ENCODE measurements at regions of chr3 and their contacts with region 1.

Region 1: DNA sequence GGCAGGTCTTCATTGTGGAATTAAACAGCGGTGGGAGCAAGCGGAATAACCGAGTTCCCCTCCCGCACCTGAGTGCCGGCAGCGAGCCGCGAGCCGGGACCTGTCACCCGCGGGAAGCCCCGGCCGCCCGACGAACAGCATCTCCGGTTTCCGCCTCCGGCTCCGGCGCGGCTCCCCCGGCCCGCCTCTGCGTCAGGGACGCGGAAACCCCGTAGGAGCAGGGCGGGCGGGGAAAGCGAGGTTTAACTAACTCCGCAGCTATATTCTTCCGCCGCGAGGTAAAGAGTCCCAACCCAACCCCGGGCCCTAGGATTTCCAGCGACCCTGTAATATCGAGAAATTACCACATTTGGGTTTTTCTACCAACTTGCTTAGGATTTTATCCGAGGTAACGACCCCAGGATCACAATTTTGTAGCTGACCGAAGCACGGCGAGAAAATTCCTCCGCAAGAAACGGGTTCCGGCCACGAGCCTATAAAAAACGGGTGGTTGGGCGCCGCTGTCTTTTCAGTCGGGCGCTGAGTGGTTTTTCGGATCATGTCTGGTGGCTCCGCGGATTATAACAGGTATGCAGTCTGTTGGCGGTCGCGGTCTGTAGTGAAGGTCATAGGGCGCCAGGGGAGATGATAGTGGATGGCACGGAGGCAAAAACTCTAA is at the start of gene EIF4A2:
- DNase-seq: peak; percentile 87 to 93 (median 91)
- ATAC-seq: peak; percentile 86
- H3K4me3 ChIP-seq: peak within 1 kb of the TSS; percentile 88
- H3K4me3 Mint-ChIP-seq: peak within 1 kb of the TSS; percentile 95 to 100 (median 99)
- H3K27ac ChIP-seq: peak within 1 kb of the TSS; percentile 97
- H3K27ac Mint-ChIP-seq: peak within 1 kb of the TSS; percentile 96 to 100 (median 99)
- H3K4me1 ChIP-seq: peaks cover 37 to 39% of the 10 kb centered on the region in 2 donors
- H3K4me1 Mint-ChIP-seq: peaks cover 22 to 59% (median 51%) of the 10 kb centered on the region in 7 donors
- H3K27me3 ChIP-seq: no peaks in the 10 kb centered on the region
- H3K27me3 Mint-ChIP-seq: peaks cover 0 to 3% (median 0%) of the 10 kb centered on the region in 5 donors
- total RNA-seq, gene EIF4A2: 401 to 804 (median 650) TPM

Region 2: GRCh38 chr3:185585859-185586685 is 1197.1 kb before region 1 on chr3 and contains the start of gene SENP2:
- CTCF ChIA-PET with region 1: no interaction called
- POLR2A ChIA-PET with region 1: interaction called, 5 read pairs
- intact Hi-C with region 1: loop called (anchors 1 to 10 kb)
- DNase-seq: peak; percentile 96 to 100 (median 100)
- ATAC-seq: peak; percentile 94
- H3K4me3 ChIP-seq: peak within 1 kb of the TSS; percentile 95
- H3K4me3 Mint-ChIP-seq: peak within 1 kb of the TSS; percentile 79 to 94 (median 87)
- H3K27ac ChIP-seq: peak within 1 kb of the TSS; percentile 95
- H3K27ac Mint-ChIP-seq: peak within 1 kb of the TSS; percentile 86 to 99 (median 95)
- H3K4me1 ChIP-seq: peaks cover 21 to 27% of the 10 kb centered on the region in 2 donors
- H3K4me1 Mint-ChIP-seq: peaks cover 24 to 40% (median 31%) of the 10 kb centered on the region in 7 donors
- H3K27me3 ChIP-seq: no peaks in the 10 kb centered on the region
- H3K27me3 Mint-ChIP-seq: peaks cover 0 to 5% (median 0%) of the 10 kb centered on the region in 5 donors
- total RNA-seq, gene SENP2: 30.0 to 59.2 (median 47.3) TPM

Region 3: GRCh38 chr3:186570096-186570940 is 212.9 kb before region 1 on chr3 and contains the start of gene DNAJB11:
- CTCF ChIA-PET with region 1: no interaction called
- POLR2A ChIA-PET with region 1: interaction called, 74 read pairs
- intact Hi-C with region 1: loop called (anchors 1 kb)
- DNase-seq: peak; percentile 83 to 100 (median 99)
- ATAC-seq: peak; percentile 91
- H3K4me3 ChIP-seq: peak within 1 kb of the TSS; percentile 85
- H3K4me3 Mint-ChIP-seq: peak within 1 kb of the TSS; percentile 83 to 98 (median 95)
- H3K27ac ChIP-seq: peak within 1 kb of the TSS; percentile 95
- H3K27ac Mint-ChIP-seq: peak within 1 kb of the TSS; percentile 85 to 99 (median 98)
- H3K4me1 ChIP-seq: peaks cover 25 to 33% of the 10 kb centered on the region in 2 donors
- H3K4me1 Mint-ChIP-seq: peaks cover 20 to 70% (median 66%) of the 10 kb centered on the region in 7 donors
- H3K27me3 ChIP-seq: no peaks in the 10 kb centered on the region
- H3K27me3 Mint-ChIP-seq: peaks cover 0 to 4% (median 0%) of the 10 kb centered on the region in 5 donors
- total RNA-seq, gene DNAJB11: 29.9 to 75.2 (median 63.1) TPM

Region 4: GRCh38 chr3:186798239-186798874 is 15.2 kb after region 1 on chr3:
- CTCF ChIA-PET with region 1: no interaction called
- POLR2A ChIA-PET with region 1: interaction called, 121 read pairs
- intact Hi-C with region 1: loop called in 1 of 2 experiments (anchors 2 kb)
- DNase-seq: no peak
- ATAC-seq: no peak
- H3K4me3 ChIP-seq: no peak overlapping the region
- H3K4me3 Mint-ChIP-seq: no peak overlapping the region
- H3K27ac ChIP-seq: no peak overlapping the region
- H3K27ac Mint-ChIP-seq: peak overlapping the region in 2 of 9 donors; percentile 36 to 59
- H3K4me1 ChIP-seq: peaks cover 0 to 2% of the 10 kb centered on the region in 2 donors
- H3K4me1 Mint-ChIP-seq: peaks cover 6 to 31% (median 17%) of the 10 kb centered on the region in 7 donors
- H3K27me3 ChIP-seq: no peaks in the 10 kb centered on the region
- H3K27me3 Mint-ChIP-seq: no peaks in the 10 kb centered on the region

Region 5: GRCh38 chr3:186826976-186827731 is 44.0 kb after region 1 on chr3:
- CTCF ChIA-PET with region 1: no interaction called
- POLR2A ChIA-PET with region 1: interaction called, 39 read pairs
- intact Hi-C with region 1: loop called (anchors 1 kb)
- DNase-seq: peak; percentile 79 to 92 (median 87)
- ATAC-seq: peak; percentile 96
- H3K4me3 ChIP-seq: peak overlapping the region; percentile 66
- H3K4me3 Mint-ChIP-seq: peak overlapping the region; percentile 53 to 91 (median 80)
- H3K27ac ChIP-seq: peak overlapping the region; percentile 52
- H3K27ac Mint-ChIP-seq: peak overlapping the region in 2 of 9 donors; percentile 18 to 19
- H3K4me1 ChIP-seq: peaks cover 6 to 21% of the 10 kb centered on the region in 2 donors
- H3K4me1 Mint-ChIP-seq: peaks cover 15 to 24% (median 20%) of the 10 kb centered on the region in 7 donors
- H3K27me3 ChIP-seq: peaks cover 0 to 22% of the 10 kb centered on the region in 2 donors
- H3K27me3 Mint-ChIP-seq: peaks cover 45 to 61% (median 52%) of the 10 kb centered on the region in 5 donors

Region 6: DNA sequence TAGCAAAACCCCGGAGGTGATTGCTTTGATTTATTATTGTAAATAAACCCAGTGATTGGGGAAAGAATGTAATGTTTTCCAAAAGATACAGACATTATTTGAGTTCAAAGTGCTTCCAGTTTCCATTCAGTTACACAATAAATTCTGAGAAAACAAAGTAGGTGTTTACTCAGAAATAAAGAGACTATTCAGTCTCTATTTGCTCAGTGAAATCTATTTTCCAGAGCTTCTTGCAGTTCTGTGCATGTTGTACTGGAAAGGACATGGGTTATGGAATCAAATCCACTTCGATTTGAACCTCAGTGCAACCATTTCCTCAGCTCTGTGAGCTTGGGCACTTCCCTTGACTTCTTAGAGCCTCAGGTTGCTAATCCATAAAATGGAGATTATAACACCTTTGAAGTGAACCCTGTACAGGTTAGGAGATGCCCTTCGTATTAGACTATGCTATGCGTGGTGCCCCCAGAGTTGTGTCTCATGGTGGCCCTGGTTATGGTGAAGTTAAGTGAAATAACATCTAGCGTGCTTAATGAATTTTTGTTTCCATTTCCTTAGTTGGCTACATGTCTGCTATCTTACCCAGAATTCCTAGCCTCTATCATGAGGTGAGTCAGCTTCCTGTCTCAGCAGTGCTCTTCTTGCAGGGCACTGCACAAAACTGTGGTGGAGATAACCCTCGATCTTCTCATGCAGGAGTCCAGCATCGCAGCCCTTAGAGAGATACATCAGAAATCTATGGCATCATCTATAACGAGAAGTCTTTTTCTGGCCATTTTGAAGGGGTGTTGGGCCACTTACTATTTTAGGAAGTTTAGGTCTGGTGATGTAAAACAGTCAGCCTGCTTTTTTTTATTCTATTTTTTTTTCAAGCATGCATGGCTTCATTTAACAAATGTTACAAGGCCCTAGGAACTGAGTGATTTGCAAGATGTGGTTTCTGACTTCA is 258.4 kb after region 1 on chr3:
- CTCF ChIA-PET with region 1: no interaction called
- POLR2A ChIA-PET with region 1: interaction called, 4 read pairs
- intact Hi-C with region 1: loop called in 1 of 2 experiments (anchors 5 kb)
- DNase-seq: peak in 8 of 9 donors; percentile 38 to 77 (median 61)
- ATAC-seq: peak; percentile 93
- H3K4me3 ChIP-seq: peak overlapping the region; percentile 12
- H3K4me3 Mint-ChIP-seq: peak overlapping the region; percentile 56 to 88 (median 80)
- H3K27ac ChIP-seq: peak overlapping the region; percentile 67
- H3K27ac Mint-ChIP-seq: peak overlapping the region; percentile 93 to 99 (median 96)
- H3K4me1 ChIP-seq: peaks cover 41 to 79% of the 10 kb centered on the region in 2 donors
- H3K4me1 Mint-ChIP-seq: peaks cover 59 to 95% (median 84%) of the 10 kb centered on the region in 7 donors
- H3K27me3 ChIP-seq: no peaks in the 10 kb centered on the region
- H3K27me3 Mint-ChIP-seq: no peaks in the 10 kb centered on the region